Activated CD4-positive, alpha-beta T cell treated with anti-CD3 and anti-CD28 coated beads for 36 hours (primary cell): ENCODE measurements at regions of chr21 and their contacts with region 1.

Region 1: DNA sequence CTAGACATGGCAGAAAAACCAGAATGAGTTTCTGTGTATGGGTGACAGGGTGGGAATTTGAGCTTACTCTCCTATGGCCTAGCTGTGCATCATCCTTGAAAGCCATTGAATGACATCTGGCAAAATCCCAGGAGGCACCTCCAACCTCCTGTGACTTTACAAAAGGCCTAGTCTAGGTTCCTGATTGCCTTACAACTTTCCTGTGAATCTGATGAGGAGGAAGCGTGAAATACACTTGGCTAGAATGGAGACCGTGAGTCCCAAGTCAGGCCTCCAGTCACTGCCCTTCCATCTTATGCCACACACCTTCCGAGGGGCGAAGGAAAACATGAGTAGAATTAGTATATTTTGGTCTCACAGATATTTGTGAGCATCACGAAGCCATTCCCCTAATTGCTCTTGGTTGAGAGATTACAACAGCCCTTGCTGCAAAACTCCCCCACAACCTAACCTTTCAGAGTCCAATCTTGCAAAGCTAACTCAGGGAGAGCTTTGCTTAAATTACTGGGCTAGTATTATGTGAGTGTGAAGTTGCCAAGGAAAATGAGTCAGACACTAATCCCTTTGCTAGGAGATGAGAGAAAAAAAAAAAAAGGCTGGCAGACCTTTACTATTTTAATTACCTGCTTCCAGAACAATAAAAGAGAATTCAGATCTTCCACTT is 36.3 kb upstream of the PAXBP1 start:
- DNase-seq: no peak
- ATAC-seq: no peak
- H3K4me3 Mint-ChIP-seq: no peak overlapping the region
- H3K27ac Mint-ChIP-seq: peak overlapping the region; percentile 45
- H3K4me1 Mint-ChIP-seq: peaks cover 35% of the 10 kb centered on the region
- H3K27me3 Mint-ChIP-seq: no peaks in the 10 kb centered on the region

Region 2: DNA sequence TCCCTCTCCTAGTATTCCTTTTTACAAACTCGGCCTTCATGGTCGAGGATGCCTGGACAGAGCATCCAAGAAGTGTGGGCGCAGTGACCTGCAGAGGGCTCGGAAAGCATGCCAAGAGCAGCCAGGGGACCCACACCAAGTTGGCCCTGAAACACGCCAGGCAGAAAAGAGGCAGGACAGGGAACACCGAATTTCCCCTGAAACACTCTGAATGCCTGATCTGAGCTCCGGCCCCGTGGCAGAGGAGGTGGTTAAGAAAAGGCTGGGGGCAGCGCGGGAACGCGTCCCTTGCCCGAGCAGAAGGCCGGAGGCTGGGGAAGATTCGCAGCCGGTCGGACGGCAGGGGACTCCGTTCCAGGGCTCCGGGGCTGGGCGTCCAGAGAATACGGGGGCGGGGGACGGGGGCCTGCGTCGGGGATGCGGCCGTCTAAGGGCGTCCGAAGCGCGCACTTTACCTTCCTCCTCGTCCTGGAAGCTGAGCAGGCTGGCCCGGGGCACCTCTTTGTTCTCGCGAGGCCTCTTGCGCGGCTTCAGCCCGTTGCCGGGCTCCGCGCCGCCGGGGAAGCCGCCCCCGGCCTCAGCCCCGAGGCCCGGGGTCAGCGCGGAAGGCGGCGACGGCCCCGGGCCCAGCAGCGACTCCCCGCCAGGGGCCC is 36.9 kb before region 1 on chr21:
- CTCF ChIA-PET with region 1: interaction called, 5 read pairs
- POLR2A ChIA-PET with region 1: interaction called, 5 read pairs
- intact Hi-C with region 1: loop called (anchors 1 to 5 kb)
- DNase-seq: peak; percentile 76
- ATAC-seq: peak; percentile 17
- H3K4me3 Mint-ChIP-seq: peak overlapping the region; percentile 99
- H3K27ac Mint-ChIP-seq: peak overlapping the region; percentile 96
- H3K4me1 Mint-ChIP-seq: peaks cover 54% of the 10 kb centered on the region
- H3K27me3 Mint-ChIP-seq: no peaks in the 10 kb centered on the region

Region 3: DNA sequence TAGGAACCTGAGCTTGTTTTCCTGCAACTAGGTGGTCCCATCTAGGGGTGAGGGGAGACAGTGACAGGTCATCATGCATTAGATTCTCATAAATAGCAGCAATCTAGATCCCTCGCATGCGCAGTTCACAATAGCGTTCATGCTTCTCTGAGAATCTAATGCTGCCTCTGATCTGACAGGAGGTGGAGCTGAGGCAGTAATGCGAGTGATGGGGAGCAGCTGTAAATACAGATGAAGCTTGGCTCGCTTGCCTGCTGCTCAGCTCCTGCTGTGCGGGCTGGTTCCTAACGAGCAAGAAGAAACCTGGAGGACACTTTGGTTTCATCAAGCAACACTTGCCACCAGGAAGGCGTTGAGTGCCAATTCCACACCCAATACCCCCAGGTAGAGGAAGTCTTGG is 122.8 kb after region 1 on chr21:
- CTCF ChIA-PET with region 1: no interaction called
- POLR2A ChIA-PET with region 1: no interaction called
- intact Hi-C with region 1: no loop called
- DNase-seq: no peak
- ATAC-seq: no peak
- H3K4me3 Mint-ChIP-seq: no peak overlapping the region
- H3K27ac Mint-ChIP-seq: no peak overlapping the region
- H3K4me1 Mint-ChIP-seq: peaks cover 35% of the 10 kb centered on the region
- H3K27me3 Mint-ChIP-seq: peaks cover 2% of the 10 kb centered on the region